Activated B cell treated with CpG ODN at 0.5 μM for 24 hours (primary cell): ENCODE measurements at regions of chr2 and their contacts with region 1.

Region 1: GRCh38 chr2:75608684-75609333 is 37.8 kb upstream of the MRPL19 start:
- DNase-seq: peak; percentile 50
- ATAC-seq: peak; percentile 78
- H3K4me3 Mint-ChIP-seq: no peak overlapping the region
- H3K27ac Mint-ChIP-seq: no peak overlapping the region
- H3K4me1 Mint-ChIP-seq: no peaks in the 10 kb centered on the region
- H3K27me3 Mint-ChIP-seq: peaks cover 59% of the 10 kb centered on the region
- CTCF ChIP-seq: peak; percentile 72

Region 2: DNA sequence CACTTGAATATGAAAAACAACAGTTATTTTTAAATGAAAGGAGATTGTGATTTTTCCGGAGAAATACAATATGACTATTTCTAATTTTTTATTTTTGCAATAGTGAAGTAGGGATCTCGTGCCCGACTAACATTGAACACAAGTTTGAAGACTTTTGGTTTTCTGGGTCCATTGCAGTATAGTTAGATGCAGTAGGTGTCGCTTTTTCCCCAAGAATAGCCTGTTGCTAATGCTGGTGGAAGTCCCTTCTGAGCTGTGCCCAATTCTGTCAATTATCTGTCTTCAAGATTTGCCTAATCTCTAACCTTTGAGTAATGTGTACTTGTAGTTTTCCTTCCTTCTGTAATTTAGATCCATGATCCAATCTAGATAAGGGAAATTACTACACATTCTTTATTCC is 918.2 kb before region 1 on chr2:
- CTCF ChIA-PET with region 1: no interaction called
- POLR2A ChIA-PET with region 1: no interaction called
- intact Hi-C with region 1: loop called (anchors 1 kb)
- DNase-seq: no peak
- ATAC-seq: peak; percentile 50
- H3K4me3 Mint-ChIP-seq: no peak overlapping the region
- H3K27ac Mint-ChIP-seq: no peak overlapping the region
- H3K4me1 Mint-ChIP-seq: no peaks in the 10 kb centered on the region
- H3K27me3 Mint-ChIP-seq: peaks cover 6% of the 10 kb centered on the region
- CTCF ChIP-seq: peak; percentile 5

Region 3: GRCh38 chr2:74789271-74789670 is 819.5 kb before region 1 on chr2:
- CTCF ChIA-PET with region 1: no interaction called
- POLR2A ChIA-PET with region 1: no interaction called
- intact Hi-C with region 1: no loop called
- DNase-seq: no peak
- ATAC-seq: no peak
- H3K4me3 Mint-ChIP-seq: no peak overlapping the region
- H3K27ac Mint-ChIP-seq: no peak overlapping the region
- H3K4me1 Mint-ChIP-seq: no peaks in the 10 kb centered on the region
- H3K27me3 Mint-ChIP-seq: peaks cover 14% of the 10 kb centered on the region
- CTCF ChIP-seq: no peak

Region 4: DNA sequence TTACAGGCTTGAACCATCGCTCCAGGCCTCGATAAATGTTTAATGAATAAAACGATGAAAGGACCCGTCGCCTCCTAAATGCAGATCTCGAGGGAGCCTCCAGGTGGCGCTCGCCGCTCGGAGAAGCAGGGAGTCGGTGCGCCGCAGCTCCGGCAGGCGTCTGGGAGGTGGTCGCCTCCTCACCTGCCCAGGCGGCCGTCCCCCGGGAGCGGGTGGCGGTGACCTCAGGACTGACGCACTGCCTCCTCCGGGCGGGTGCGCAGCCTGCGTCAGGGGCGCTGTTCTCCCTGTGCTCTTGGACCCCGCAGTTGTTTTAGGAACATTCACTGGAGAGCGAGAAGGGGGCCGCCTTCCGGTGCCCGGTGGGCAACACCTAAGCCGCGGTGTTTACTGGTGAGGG is 689.0 kb before region 1 on chr2:
- CTCF ChIA-PET with region 1: interaction called, 11 read pairs
- POLR2A ChIA-PET with region 1: interaction called, 3 read pairs
- intact Hi-C with region 1: loop called (anchors 1 kb)
- DNase-seq: peak; percentile 72
- ATAC-seq: peak; percentile 88
- H3K4me3 Mint-ChIP-seq: peak overlapping the region; percentile 42
- H3K27ac Mint-ChIP-seq: no peak overlapping the region
- H3K4me1 Mint-ChIP-seq: peaks cover 14% of the 10 kb centered on the region
- H3K27me3 Mint-ChIP-seq: peaks cover 10% of the 10 kb centered on the region
- CTCF ChIP-seq: peak; percentile 57

Region 5: GRCh38 chr2:74966887-74967286 is 641.9 kb before region 1 on chr2:
- CTCF ChIA-PET with region 1: no interaction called
- POLR2A ChIA-PET with region 1: no interaction called
- intact Hi-C with region 1: no loop called
- DNase-seq: no peak
- ATAC-seq: no peak
- H3K4me3 Mint-ChIP-seq: no peak overlapping the region
- H3K27ac Mint-ChIP-seq: no peak overlapping the region
- H3K4me1 Mint-ChIP-seq: peaks cover 19% of the 10 kb centered on the region
- H3K27me3 Mint-ChIP-seq: no peaks in the 10 kb centered on the region
- CTCF ChIP-seq: no peak

Region 6: GRCh38 chr2:75053484-75054112 is 555.2 kb before region 1 on chr2:
- CTCF ChIA-PET with region 1: interaction called, 4 read pairs
- POLR2A ChIA-PET with region 1: no interaction called
- intact Hi-C with region 1: loop called (anchors 1 kb)
- DNase-seq: no peak
- ATAC-seq: peak; percentile 62
- H3K4me3 Mint-ChIP-seq: no peak overlapping the region
- H3K27ac Mint-ChIP-seq: no peak overlapping the region
- H3K4me1 Mint-ChIP-seq: no peaks in the 10 kb centered on the region
- H3K27me3 Mint-ChIP-seq: no peaks in the 10 kb centered on the region
- CTCF ChIP-seq: no peak

Region 7: DNA sequence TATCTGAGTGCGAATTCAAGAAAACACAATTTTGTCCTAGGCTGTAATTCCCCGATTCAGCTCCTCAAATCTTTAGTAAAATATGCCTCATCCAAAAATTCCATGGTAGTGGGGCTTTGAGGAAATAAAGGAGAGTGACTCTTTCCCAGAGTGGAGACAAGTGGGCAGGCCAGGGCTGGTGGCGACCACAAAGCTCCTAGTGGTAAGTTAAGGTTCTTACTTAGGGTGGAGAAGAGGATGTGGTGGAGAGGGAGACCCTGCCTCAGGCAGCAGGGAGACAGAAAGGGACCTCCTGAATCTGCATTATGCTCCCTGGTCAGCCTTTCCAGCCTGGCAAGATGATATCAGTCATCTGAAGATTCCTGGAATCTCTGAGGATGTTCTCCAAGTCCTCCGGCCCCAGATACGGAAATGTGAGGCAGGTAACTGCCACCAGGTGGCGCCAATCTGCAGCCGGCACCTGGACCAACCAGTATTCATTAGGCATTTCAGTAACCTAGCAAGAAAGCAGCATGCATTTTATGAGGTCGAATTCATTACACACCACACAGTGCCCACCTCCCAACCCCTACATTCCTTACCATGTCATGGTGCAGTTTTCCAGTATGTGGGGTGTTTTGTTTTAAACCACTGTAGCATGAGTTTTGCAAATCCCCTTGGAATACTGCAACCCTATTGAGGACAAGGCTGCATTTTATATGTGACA is 544.0 kb before region 1 on chr2:
- CTCF ChIA-PET with region 1: interaction called, 13 read pairs
- POLR2A ChIA-PET with region 1: no interaction called
- intact Hi-C with region 1: loop called (anchors 1 kb)
- DNase-seq: peak; percentile 42
- ATAC-seq: no peak
- H3K4me3 Mint-ChIP-seq: no peak overlapping the region
- H3K27ac Mint-ChIP-seq: no peak overlapping the region
- H3K4me1 Mint-ChIP-seq: no peaks in the 10 kb centered on the region
- H3K27me3 Mint-ChIP-seq: no peaks in the 10 kb centered on the region
- CTCF ChIP-seq: peak; percentile 56

Region 8: GRCh38 chr2:75199428-75200011 is 409.3 kb before region 1 on chr2 and contains the start of gene TACR1:
- CTCF ChIA-PET with region 1: interaction called, 14 read pairs
- POLR2A ChIA-PET with region 1: no interaction called
- intact Hi-C with region 1: loop called (anchors 1 kb)
- DNase-seq: peak; percentile 55
- ATAC-seq: peak; percentile 79
- H3K4me3 Mint-ChIP-seq: peak within 1 kb of the TSS; percentile 81
- H3K27ac Mint-ChIP-seq: no peak within 1 kb of the TSS
- H3K4me1 Mint-ChIP-seq: peaks cover 20% of the 10 kb centered on the region
- H3K27me3 Mint-ChIP-seq: peaks cover 61% of the 10 kb centered on the region
- CTCF ChIP-seq: peak; percentile 43
- total RNA-seq, gene TACR1: not detected in 2 replicates

Region 9: GRCh38 chr2:75311993-75312392 is 296.8 kb before region 1 on chr2:
- CTCF ChIA-PET with region 1: no interaction called
- POLR2A ChIA-PET with region 1: no interaction called
- intact Hi-C with region 1: loop called (anchors 2 kb)
- DNase-seq: peak; percentile 38
- ATAC-seq: peak; percentile 100
- H3K4me3 Mint-ChIP-seq: no peak overlapping the region
- H3K27ac Mint-ChIP-seq: peak overlapping the region; percentile 3
- H3K4me1 Mint-ChIP-seq: peaks cover 17% of the 10 kb centered on the region
- H3K27me3 Mint-ChIP-seq: no peaks in the 10 kb centered on the region
- CTCF ChIP-seq: no peak